ENCODE measurements at regions of chr2 and their contacts with region 1.

Region 1: DNA sequence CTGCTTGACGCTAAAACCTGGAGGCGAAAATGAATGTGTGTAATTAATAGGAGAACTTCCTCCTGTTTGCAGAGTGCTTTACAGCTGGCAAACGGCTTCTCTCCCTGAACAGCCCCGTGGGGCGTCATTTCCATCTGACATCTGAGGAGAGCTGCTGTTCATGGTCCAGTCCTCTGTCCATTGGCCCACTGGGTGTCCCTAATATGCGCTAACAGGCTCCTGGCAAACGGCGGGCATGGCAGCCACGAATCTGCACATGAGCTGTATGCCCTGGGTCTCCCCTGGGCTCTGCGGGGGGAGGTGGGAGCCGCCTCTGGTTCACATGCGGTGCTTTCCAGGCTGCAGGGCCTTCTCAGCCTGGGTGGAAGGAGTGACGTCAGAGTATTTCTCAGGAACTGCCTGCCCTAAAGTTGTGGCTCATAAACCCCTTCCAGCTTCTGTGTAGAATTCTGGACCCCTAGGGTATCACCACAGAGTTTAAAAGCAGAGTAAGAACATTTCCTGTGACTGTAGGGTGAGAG is 73.2 kb downstream of the LRRFIP1 start:
- DNase-seq: peak; percentile 59
- ATAC-seq: peak; percentile 61
- H3K4me3 Mint-ChIP-seq: peak overlapping the region; percentile 62
- H3K27ac Mint-ChIP-seq: peak overlapping the region; percentile 82
- H3K4me1 Mint-ChIP-seq: peaks cover 96% of the 10 kb centered on the region
- H3K27me3 Mint-ChIP-seq: no peaks in the 10 kb centered on the region
- CTCF ChIP-seq: no peak

Region 2: GRCh38 chr2:237686659-237687136 is 13.9 kb before region 1 on chr2:
- CTCF ChIA-PET with region 1: interaction called, 3 read pairs
- POLR2A ChIA-PET with region 1: interaction called, 17 read pairs
- intact Hi-C with region 1: no loop called
- DNase-seq: no peak
- ATAC-seq: no peak
- H3K4me3 Mint-ChIP-seq: no peak overlapping the region
- H3K27ac Mint-ChIP-seq: peak overlapping the region; percentile 96
- H3K4me1 Mint-ChIP-seq: peaks cover 53% of the 10 kb centered on the region
- H3K27me3 Mint-ChIP-seq: no peaks in the 10 kb centered on the region
- CTCF ChIP-seq: no peak

Region 3: GRCh38 chr2:237717366-237718276 is 17.0 kb after region 1 on chr2:
- CTCF ChIA-PET with region 1: no interaction called
- POLR2A ChIA-PET with region 1: no interaction called
- intact Hi-C with region 1: loop called (anchors 2 kb)
- DNase-seq: no peak
- ATAC-seq: no peak
- H3K4me3 Mint-ChIP-seq: no peak overlapping the region
- H3K27ac Mint-ChIP-seq: peak overlapping the region; percentile 64
- H3K4me1 Mint-ChIP-seq: peaks cover 39% of the 10 kb centered on the region
- H3K27me3 Mint-ChIP-seq: no peaks in the 10 kb centered on the region
- CTCF ChIP-seq: no peak